ENCODE measurements at regions of chr14 and their contacts with region 1.

Region 1: GRCh38 chr14:32693114-32693513 is 245.6 kb upstream of the NPAS3 start:
- DNase-seq: peak in 1 of 42 donors; percentile 42

Region 2: GRCh38 chr14:32608857-32609256 is 84.3 kb before region 1 on chr14:
- intact Hi-C with region 1: loop called (anchors 10 kb)
- DNase-seq: peak in 1 of 42 donors; percentile 47

Region 3: DNA sequence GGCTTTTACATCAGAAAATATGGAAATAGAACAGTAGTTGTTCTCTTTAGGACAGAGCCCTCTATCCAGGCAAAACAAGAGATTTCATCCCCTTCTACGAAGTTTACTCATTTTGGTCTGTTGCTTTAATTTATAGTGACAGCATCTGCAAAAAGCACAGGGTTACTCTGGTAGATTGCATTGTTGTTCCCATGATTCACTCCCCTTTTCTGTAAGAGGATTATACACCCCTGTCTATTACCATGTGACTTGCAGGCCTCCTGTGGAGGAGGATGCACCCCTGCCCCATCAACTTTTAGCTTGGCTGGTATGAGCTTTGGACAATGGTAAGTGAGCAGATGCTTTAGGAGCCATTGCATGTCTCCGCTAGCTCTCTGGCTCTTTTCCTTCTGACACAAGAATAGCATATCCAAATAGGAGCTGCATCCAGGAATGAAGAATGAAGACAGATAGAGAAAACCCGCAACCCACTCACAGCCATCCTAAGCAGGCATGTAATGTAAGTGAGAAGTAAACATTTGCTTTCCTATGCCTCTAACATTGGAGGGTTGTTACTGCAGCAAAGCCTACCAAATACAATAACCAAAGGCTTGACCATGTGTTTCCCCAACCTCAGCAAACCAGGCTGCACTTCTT is 59.8 kb before region 1 on chr14:
- intact Hi-C with region 1: no loop called
- DNase-seq: no peak

Region 4: GRCh38 chr14:32745498-32745897 is 52.4 kb after region 1 on chr14:
- intact Hi-C with region 1: no loop called
- DNase-seq: no peak

Region 5: GRCh38 chr14:32786886-32787285 is 93.8 kb after region 1 on chr14:
- intact Hi-C with region 1: no loop called
- DNase-seq: no peak

Measured in head of caudate nucleus (tissue), 42 donors.